ENCODE measurements at regions of chr13 and their contacts with region 1.

Region 1: DNA sequence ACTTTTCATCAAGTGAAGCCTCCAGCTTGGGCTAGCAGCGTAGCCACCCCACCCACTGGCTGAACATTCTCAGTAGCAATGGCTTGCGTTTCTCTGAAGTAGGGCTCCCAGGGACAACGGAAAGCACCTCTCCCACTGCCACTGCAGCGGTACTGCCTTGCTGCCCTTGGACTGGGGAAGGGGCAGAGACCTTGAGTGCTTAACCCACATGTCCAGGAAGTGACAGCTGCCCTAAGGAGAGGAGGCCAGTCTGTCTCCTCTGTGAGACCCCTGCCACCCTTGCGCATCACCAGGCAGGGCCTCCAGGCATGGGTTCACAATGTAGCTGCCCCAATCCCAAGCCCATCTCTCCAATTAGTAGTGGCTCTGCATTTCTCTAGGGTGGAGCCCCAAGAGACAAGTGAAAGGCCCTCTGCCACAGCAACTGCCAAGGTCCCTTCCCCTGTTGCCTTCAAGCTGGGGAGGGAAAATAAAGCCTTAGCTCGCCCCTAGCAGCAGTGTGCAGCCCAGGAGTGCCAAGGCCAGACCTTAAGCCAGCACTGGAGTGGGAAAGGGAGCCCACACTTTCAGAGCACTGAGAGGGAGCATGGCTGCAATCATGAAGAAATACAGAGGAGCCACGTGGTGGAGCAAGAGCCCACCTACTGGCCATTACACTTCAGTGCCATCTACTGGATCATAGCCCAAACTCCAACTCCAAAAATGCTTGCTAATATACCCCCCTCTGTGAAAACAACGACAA is 175.9 kb upstream of the TRPC4 start:
- DNase-seq: peak; percentile 16 to 69 (median 20)
- ATAC-seq: peak; percentile 96
- H3K4me3 ChIP-seq: no peak overlapping the region
- H3K27ac ChIP-seq: no peak overlapping the region; the same call in 2 of the 3 replicates
- H3K4me1 ChIP-seq: no peaks in the 10 kb centered on the region; a peak in 1 of 5 replicates
- H3K27me3 ChIP-seq: no peaks in the 10 kb centered on the region
- CTCF ChIP-seq: peak; percentile 64 to 97 (median 90)
- EP300 ChIP-seq: no peak
- POLR2A ChIP-seq: no peak
- RAD21 ChIP-seq: peak; percentile 43 to 84

Region 2: GRCh38 chr13:37109051-37109678 is 936.3 kb before region 1 on chr13:
- CTCF ChIA-PET with region 1: no interaction called
- POLR2A ChIA-PET with region 1: no interaction called
- in situ Hi-C with region 1: no loop called
- intact Hi-C with region 1: loop called (anchors 5 kb)
- DNase-seq: peak in 1 of 4 experiments; percentile 11
- ATAC-seq: no peak
- H3K4me3 ChIP-seq: no peak overlapping the region
- H3K27ac ChIP-seq: no peak overlapping the region
- H3K4me1 ChIP-seq: peaks cover 0 to 5% of the 10 kb centered on the region in 2 experiments; a peak in 1 of 5 replicates
- H3K27me3 ChIP-seq: peaks cover 0 to 7% of the 10 kb centered on the region in 2 experiments; a peak in 2 of 5 replicates
- CTCF ChIP-seq: peak; percentile 16 to 53 (median 24); a peak in 3 of 6 replicates
- EP300 ChIP-seq: no peak
- POLR2A ChIP-seq: no peak
- RAD21 ChIP-seq: peak in 1 of 2 experiments; percentile 54; a peak in 3 of 4 replicates

Region 3: DNA sequence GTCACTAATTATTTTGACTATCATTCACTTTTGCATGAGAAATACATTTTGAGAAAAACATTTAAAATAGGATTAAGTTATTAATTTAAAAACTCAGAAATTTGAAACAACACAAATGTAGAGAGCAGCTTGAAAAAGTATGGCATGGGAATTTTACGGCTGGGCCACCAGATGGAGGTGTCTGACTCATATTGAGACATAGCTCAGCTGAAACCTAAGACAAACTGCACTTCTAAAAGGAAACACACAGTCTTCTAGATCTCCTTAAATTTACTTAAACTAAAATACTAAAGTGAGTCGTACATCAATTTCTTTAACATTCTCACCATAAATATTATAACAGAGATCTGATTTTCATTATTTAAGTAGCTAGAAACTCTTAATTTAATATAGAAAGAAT is 405.0 kb before region 1 on chr13:
- CTCF ChIA-PET with region 1: no interaction called
- POLR2A ChIA-PET with region 1: no interaction called
- in situ Hi-C with region 1: no loop called
- intact Hi-C with region 1: loop called (anchors 5 kb)
- DNase-seq: peak in 3 of 4 experiments; percentile 3 to 14 (median 3)
- ATAC-seq: peak; percentile 56; the same call in 1 of the 3 replicates
- H3K4me3 ChIP-seq: no peak overlapping the region
- H3K27ac ChIP-seq: no peak overlapping the region
- H3K4me1 ChIP-seq: no peaks in the 10 kb centered on the region
- H3K27me3 ChIP-seq: no peaks in the 10 kb centered on the region
- CTCF ChIP-seq: peak in 2 of 3 experiments; percentile 15 to 25; a peak in 1 of 6 replicates
- EP300 ChIP-seq: no peak
- POLR2A ChIP-seq: no peak
- RAD21 ChIP-seq: peak in 1 of 2 experiments; percentile 44; a peak in 3 of 4 replicates

Region 4: DNA sequence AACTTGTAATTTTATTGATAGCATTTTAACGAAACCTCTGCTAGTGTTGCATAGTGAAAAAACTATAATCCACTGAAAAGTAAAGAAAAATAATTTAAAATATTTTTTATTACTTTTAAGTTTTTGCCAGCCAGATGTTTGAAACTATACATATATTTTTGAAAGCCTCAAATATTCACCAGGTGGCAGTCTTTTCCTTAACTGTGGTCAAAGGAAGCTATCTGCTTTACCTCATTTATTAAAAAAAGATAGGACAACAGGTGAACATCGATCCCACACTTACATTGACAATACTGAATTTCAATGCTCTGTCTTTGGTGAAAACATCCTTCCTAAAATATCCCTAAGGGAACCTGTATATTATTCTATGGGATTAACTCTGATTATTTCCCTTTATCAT is 276.4 kb before region 1 on chr13:
- CTCF ChIA-PET with region 1: interaction called, 4 read pairs
- POLR2A ChIA-PET with region 1: no interaction called
- in situ Hi-C with region 1: no loop called
- intact Hi-C with region 1: loop called (anchors 1 kb)
- DNase-seq: peak in 2 of 4 experiments; percentile 3 to 8
- ATAC-seq: no peak
- H3K4me3 ChIP-seq: no peak overlapping the region
- H3K27ac ChIP-seq: no peak overlapping the region
- H3K4me1 ChIP-seq: no peaks in the 10 kb centered on the region
- H3K27me3 ChIP-seq: no peaks in the 10 kb centered on the region
- CTCF ChIP-seq: peak in 2 of 3 experiments; percentile 22 to 34; a peak in 2 of 6 replicates
- EP300 ChIP-seq: no peak
- POLR2A ChIP-seq: no peak
- RAD21 ChIP-seq: peak; percentile 28 to 56

Region 5: GRCh38 chr13:37869756-37870488 is 175.6 kb before region 1 on chr13 and contains the start of gene TRPC4:
- CTCF ChIA-PET with region 1: interaction called, 3 read pairs
- POLR2A ChIA-PET with region 1: interaction called, 3 read pairs
- in situ Hi-C with region 1: loop called (anchors 25 kb)
- intact Hi-C with region 1: loop called (anchors 1 kb)
- DNase-seq: peak; percentile 6 to 54 (median 21)
- ATAC-seq: peak; percentile 93
- H3K4me3 ChIP-seq: peak within 1 kb of the TSS; percentile 26
- H3K27ac ChIP-seq: no peak within 1 kb of the TSS
- H3K4me1 ChIP-seq: peaks cover 0 to 11% of the 10 kb centered on the region in 2 experiments; a peak in 2 of 5 replicates
- H3K27me3 ChIP-seq: no peaks in the 10 kb centered on the region; a peak in 1 of 5 replicates
- CTCF ChIP-seq: peak; percentile 59 to 65 (median 61)
- EP300 ChIP-seq: no peak
- POLR2A ChIP-seq: no peak
- RAD21 ChIP-seq: peak; percentile 39 to 71
- polyA plus RNA-seq, gene TRPC4: not detected

Region 6: DNA sequence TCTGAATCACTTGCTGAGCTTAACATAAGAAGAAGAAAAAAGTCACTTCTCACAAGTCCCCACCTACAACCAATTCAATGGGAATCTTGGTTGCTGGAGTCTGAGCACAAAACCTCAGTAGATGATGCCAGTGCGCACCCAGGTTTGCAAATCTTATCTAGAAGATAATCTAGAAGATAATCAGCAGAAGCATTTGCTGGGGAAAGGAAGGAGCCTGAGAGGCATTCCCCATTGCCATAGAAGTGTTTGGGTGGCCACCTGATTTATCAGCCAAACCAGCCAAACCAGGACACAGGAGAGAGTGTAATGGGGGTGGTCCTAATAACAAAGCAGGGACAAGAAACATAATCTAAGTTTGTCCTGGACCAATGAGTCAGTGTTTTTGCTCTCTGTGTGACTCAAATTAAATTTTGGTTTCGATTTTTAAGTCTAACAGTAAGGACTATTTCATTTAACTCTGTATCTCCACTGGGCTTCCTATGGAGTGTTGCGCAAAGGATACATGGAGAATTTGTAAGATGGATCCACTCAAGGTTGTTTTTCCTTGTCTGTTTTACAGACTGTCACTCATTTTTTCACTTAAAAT is 156.5 kb before region 1 on chr13:
- CTCF ChIA-PET with region 1: no interaction called
- POLR2A ChIA-PET with region 1: no interaction called
- in situ Hi-C with region 1: loop called (anchors 25 kb)
- intact Hi-C with region 1: no loop called
- DNase-seq: no peak
- ATAC-seq: no peak
- H3K4me3 ChIP-seq: no peak overlapping the region
- H3K27ac ChIP-seq: no peak overlapping the region
- H3K4me1 ChIP-seq: no peaks in the 10 kb centered on the region; a peak in 1 of 5 replicates
- H3K27me3 ChIP-seq: no peaks in the 10 kb centered on the region
- CTCF ChIP-seq: no peak
- EP300 ChIP-seq: no peak
- POLR2A ChIP-seq: no peak
- RAD21 ChIP-seq: no peak

Region 7: DNA sequence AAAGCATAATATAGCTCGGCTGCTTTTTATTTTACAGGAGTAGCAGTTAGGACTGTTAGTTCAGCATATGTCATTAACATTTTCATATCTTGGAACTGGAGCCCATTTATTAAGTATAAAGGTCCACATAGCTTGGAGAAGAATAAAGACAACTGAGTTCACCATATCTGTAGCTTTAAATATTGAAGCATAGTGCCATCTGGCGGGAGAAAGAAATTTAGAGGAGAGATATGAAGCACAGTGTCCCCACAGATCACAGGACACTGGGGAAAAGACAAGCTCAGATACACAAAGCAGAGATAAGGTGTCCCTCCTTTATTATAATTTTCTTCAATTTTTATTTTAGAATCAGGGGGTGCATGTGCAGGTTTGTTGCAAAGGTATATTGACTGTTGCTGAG is 536.7 kb after region 1 on chr13:
- CTCF ChIA-PET with region 1: no interaction called
- POLR2A ChIA-PET with region 1: no interaction called
- in situ Hi-C with region 1: no loop called
- intact Hi-C with region 1: loop called (anchors 2 kb)
- DNase-seq: peak; percentile 6 to 50 (median 11)
- ATAC-seq: peak; percentile 78
- H3K4me3 ChIP-seq: no peak overlapping the region
- H3K27ac ChIP-seq: no peak overlapping the region
- H3K4me1 ChIP-seq: no peaks in the 10 kb centered on the region
- H3K27me3 ChIP-seq: no peaks in the 10 kb centered on the region
- CTCF ChIP-seq: peak; percentile 30 to 50 (median 32); a peak in 3 of 6 replicates
- EP300 ChIP-seq: no peak
- POLR2A ChIP-seq: no peak
- RAD21 ChIP-seq: peak; percentile 40 to 53